ENCODE measurements at regions of chr2 and their contacts with region 1.

Region 1: GRCh38 chr2:15577071-15577735 is 14.5 kb upstream of the DDX1 start:
- DNase-seq: peak; percentile 73
- H3K4me3 ChIP-seq: no peak overlapping the region
- H3K27ac ChIP-seq: no peak overlapping the region
- H3K4me1 ChIP-seq: no peaks in the 10 kb centered on the region
- H3K27me3 ChIP-seq: no peaks in the 10 kb centered on the region
- CTCF ChIP-seq: peak; percentile 95
- EP300 ChIP-seq: no peak
- RAD21 ChIP-seq: peak; percentile 100

Region 2: GRCh38 chr2:15115776-15116175 is 461.4 kb before region 1 on chr2:
- CTCF ChIA-PET with region 1: interaction called, 10 read pairs
- POLR2A ChIA-PET with region 1: no interaction called
- DNase-seq: no peak
- H3K4me3 ChIP-seq: no peak overlapping the region
- H3K27ac ChIP-seq: no peak overlapping the region
- H3K4me1 ChIP-seq: no peaks in the 10 kb centered on the region
- H3K27me3 ChIP-seq: no peaks in the 10 kb centered on the region
- CTCF ChIP-seq: no peak
- EP300 ChIP-seq: no peak
- RAD21 ChIP-seq: no peak

Region 3: DNA sequence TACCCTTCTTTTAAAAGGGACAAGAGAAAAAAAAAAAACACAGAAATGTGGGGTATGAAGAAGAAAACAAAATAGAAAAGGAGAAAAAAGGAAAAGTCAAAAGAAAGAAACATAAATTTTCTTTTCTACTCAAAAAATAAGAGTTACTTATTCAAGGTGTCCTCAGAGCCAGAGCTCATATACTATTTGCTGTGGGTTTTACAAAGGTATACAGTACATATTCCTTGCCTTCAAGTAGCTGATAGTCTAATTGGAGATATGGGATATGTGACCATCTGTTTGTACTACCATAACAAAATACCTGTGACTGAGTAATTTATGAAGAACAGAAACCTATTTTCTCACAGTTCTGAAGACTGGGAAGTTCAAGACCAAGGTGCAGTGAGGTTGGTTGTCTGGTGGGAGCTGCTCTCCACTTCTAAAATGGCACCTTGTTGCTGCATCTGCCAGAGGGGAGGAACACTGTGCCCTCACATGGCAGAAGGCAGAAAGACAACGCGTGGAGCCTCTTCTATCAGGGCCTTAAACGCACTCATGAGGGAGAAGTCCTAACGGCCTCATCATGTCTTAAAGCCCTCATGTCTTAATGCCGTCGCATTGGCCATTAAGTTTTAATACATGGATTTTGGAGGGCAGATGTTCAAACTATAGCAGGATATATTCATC is 50.0 kb before region 1 on chr2:
- CTCF ChIA-PET with region 1: interaction called, 10 read pairs
- POLR2A ChIA-PET with region 1: no interaction called
- DNase-seq: no peak
- H3K4me3 ChIP-seq: no peak overlapping the region
- H3K27ac ChIP-seq: no peak overlapping the region
- H3K4me1 ChIP-seq: no peaks in the 10 kb centered on the region; a peak in 1 of 4 replicates
- H3K27me3 ChIP-seq: no peaks in the 10 kb centered on the region
- CTCF ChIP-seq: no peak
- EP300 ChIP-seq: no peak
- RAD21 ChIP-seq: no peak

Region 4: DNA sequence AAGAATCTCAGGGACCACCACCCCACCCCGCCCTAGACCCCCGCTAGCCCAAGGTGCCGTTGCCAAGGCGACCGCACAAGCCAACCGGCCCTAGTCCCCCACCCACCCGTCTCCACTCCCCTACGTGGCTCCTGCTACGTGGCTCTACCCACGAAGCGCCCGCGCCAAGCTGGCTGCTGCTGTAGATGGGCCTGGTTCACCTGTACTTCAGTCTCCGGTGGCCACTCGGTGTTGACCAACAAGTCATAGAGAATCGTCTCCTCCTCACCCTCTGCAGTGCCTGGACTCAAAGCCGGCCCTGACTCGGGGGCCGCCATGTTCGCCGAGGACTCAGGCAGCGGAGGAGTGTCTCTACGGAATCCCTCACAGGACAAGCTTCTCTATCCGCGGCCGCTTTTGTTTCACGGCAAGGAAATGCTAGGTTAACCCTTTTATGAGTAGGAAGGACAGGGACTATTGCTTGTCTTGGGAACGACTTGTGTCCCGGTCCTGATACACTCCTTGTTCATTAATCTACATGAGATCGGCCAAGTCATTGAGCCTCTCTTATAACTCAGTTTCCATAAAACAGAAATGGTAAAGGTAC is 16.1 kb before region 1 on chr2 and contains the start of gene NBAS:
- CTCF ChIA-PET with region 1: interaction called, 25 read pairs
- POLR2A ChIA-PET with region 1: no interaction called
- DNase-seq: peak; percentile 89
- H3K4me3 ChIP-seq: peak within 1 kb of the TSS; percentile 87 to 98
- H3K27ac ChIP-seq: peak within 1 kb of the TSS; percentile 62 to 86; a peak in 3 of 4 replicates
- H3K4me1 ChIP-seq: peaks cover 5 to 15% of the 10 kb centered on the region in 2 experiments; a peak in 2 of 4 replicates
- H3K27me3 ChIP-seq: no peaks in the 10 kb centered on the region
- CTCF ChIP-seq: no peak
- EP300 ChIP-seq: no peak; a peak in 2 of 4 replicates
- RAD21 ChIP-seq: no peak
- polyA plus RNA-seq, gene NBAS: 11.9 and 12.0 TPM in 2 replicates